ENCODE measurements at regions of chr1 and their contacts with region 1.

Region 1: GRCh38 chr1:57616921-57617320 is 193.1 kb upstream of the DAB1 start:
- DNase-seq: peak; percentile 85

Region 2: DNA sequence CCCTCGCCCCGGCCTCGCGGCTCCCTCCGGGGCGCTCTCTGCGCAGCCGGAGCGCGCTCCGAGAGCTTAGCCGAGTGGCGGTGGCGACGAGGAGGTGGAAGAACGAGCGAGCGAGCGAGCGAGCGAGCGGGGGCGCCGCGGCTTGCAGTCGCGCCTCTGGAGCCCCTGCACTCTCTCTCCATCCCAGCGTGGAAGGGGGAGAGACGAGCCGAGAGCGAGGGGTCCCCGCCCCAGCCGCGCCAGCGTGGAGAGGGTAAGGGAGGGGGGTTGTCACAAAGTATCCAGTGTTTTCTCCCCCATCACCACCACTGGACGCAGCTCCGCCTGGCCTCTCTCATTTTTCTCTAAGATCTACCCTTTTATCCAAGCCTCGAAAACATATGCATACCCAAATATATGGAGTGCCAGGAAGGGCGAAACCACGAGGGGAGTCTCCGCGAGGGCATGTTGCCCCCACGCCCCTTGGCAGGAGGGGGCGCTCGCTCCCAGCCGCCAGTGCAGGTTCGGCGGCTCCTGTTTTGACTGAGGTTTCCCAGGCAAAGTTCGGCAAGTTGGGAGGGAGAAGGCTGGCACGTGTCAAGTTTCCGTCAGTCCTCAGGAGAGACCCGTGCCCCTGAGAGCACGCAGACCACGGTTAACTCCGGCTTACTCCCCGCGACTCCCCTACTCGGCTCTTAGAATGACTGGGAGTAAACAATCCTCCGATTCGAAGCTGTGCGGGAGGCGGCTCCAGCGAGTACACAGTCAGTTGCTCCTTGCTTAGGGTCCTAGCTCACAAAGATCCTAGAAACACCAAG is 192.5 kb before region 1 on chr1:
- intact Hi-C with region 1: loop called (anchors 10 kb)
- DNase-seq: no peak

Region 3: GRCh38 chr1:57599236-57599994 is 17.5 kb before region 1 on chr1:
- intact Hi-C with region 1: loop called (anchors 2 kb)
- DNase-seq: no peak

Measured in cardiac septum (tissue), 1 donor.